CD14-positive monocyte (primary cell): ENCODE measurements at regions of chr10 and their contacts with region 1.

Region 1: DNA sequence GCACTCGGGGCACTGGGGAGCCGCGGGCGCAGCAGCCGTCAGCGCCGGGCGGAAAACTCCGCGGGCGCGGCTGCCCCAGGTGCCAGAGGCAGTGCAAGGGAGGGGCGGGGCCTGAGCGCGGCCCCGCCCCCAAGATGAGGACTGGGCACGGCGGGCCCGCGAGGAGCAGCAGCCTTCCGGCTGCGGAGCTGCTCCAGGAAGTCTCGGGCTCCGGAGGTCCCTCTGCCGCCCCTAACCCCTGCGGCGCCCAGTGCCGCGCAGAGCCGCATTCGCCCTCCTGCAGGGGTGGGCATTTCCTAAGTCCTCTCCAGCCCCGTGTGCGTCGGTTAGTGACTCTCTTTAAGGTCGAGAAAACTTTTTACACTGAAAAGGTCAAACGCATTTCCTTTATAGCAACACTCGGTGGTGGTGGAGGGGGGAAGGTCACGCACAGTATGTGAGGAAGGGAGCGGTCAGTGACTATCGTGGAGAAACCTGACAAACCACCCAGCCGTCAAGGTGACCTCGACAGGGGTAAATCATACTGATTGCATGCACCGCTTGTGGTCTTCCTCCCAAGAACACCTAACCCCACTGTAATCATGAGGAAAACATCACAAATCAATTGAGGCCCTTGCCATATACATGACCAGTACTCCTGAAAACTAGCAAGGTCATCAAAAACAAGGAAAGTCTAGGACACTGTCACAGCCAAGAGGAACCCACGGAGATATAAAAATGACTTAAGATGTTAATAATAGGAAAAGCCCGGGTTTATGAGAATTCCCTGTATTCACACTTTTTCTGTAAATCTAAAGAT is at the start of gene ANXA11:
- DNase-seq: peak; percentile 69 to 80 (median 74)
- H3K4me3 ChIP-seq: peak within 1 kb of the TSS; percentile 73 to 92 (median 91)
- H3K4me3 Mint-ChIP-seq: peak within 1 kb of the TSS; percentile 88 to 97
- H3K27ac ChIP-seq: peak within 1 kb of the TSS; percentile 72 to 81
- H3K27ac Mint-ChIP-seq: peak within 1 kb of the TSS; percentile 87 to 97 (median 92)
- H3K4me1 ChIP-seq: peaks cover 47 to 49% of the 10 kb centered on the region in 2 donors
- H3K4me1 Mint-ChIP-seq: peaks cover 50% of the 10 kb centered on the region
- H3K27me3 ChIP-seq: no peaks in the 10 kb centered on the region
- H3K27me3 Mint-ChIP-seq: peaks cover 2% of the 10 kb centered on the region in 3 donors
- CTCF ChIP-seq: no peak
- polyA plus RNA-seq, gene ANXA11: 95.6 to 174 (median 134) TPM

Region 2: GRCh38 chr10:80078448-80079311 is 127.0 kb before region 1 on chr10 and contains the start of gene TMEM254:
- intact Hi-C with region 1: loop called in 1 of 2 experiments (anchors 10 kb)
- DNase-seq: peak; percentile 80 to 91 (median 81)
- H3K4me3 ChIP-seq: peak within 1 kb of the TSS; percentile 59 to 98 (median 85)
- H3K4me3 Mint-ChIP-seq: peak within 1 kb of the TSS; percentile 95 to 99
- H3K27ac ChIP-seq: peak within 1 kb of the TSS; percentile 70 to 88
- H3K27ac Mint-ChIP-seq: peak within 1 kb of the TSS; percentile 82 to 94 (median 87)
- H3K4me1 ChIP-seq: peaks cover 13 to 16% of the 10 kb centered on the region in 2 donors
- H3K4me1 Mint-ChIP-seq: peaks cover 18% of the 10 kb centered on the region
- H3K27me3 ChIP-seq: no peaks in the 10 kb centered on the region
- H3K27me3 Mint-ChIP-seq: no peaks in the 10 kb centered on the region
- CTCF ChIP-seq: no peak
- polyA plus RNA-seq, gene TMEM254: 13.6 to 43.1 (median 25.9) TPM

Region 3: DNA sequence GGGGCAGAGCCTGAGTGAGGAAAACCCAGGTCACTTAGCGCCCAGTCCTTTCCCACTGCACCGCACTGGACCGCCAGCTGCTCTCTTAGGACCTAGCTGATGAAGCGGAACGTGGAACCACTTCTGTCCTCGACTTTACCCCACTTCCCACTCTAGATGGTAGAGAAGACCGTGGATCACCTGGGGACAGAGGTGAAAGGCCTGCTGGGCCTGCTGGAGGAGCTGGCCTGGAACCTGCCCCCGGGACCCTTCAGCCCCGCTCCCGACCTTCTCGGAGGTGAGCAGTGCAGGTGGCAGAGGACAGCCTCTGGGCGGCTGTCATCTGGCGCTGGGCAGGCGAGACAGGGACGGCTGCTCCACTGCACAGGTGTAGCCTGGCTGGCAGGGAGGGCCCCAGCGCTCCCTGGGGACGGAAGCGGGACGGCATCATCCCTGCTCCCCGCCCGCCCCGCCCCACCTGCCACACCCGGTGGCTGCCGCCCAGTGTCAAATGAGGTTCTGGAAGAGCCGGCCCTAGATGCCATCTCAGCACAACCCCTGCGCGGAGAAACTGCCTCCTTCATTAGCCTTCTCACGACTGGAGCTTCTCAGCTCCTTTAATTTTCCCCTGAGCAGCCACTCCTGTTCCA is 61.5 kb before region 1 on chr10:
- intact Hi-C with region 1: loop called in 1 of 2 experiments (anchors 5 kb)
- DNase-seq: no peak
- H3K4me3 ChIP-seq: no peak overlapping the region
- H3K4me3 Mint-ChIP-seq: peak overlapping the region in 1 of 2 donors; percentile 79
- H3K27ac ChIP-seq: no peak overlapping the region
- H3K27ac Mint-ChIP-seq: no peak overlapping the region
- H3K4me1 ChIP-seq: peaks cover 12 to 14% of the 10 kb centered on the region in 2 donors
- H3K4me1 Mint-ChIP-seq: peaks cover 21% of the 10 kb centered on the region
- H3K27me3 ChIP-seq: peaks cover 0 to 5% of the 10 kb centered on the region in 2 donors
- H3K27me3 Mint-ChIP-seq: peaks cover 12 to 23% (median 12%) of the 10 kb centered on the region in 3 donors
- CTCF ChIP-seq: peak; percentile 61

Region 4: GRCh38 chr10:80158598-80159127 is 47.0 kb before region 1 on chr10:
- intact Hi-C with region 1: loop called (anchors 5 kb)
- DNase-seq: peak; percentile 35 to 82 (median 44)
- H3K4me3 ChIP-seq: no peak overlapping the region
- H3K4me3 Mint-ChIP-seq: peak overlapping the region in 1 of 2 donors; percentile 14
- H3K27ac ChIP-seq: peak overlapping the region; percentile 39 to 63
- H3K27ac Mint-ChIP-seq: peak overlapping the region in 6 of 7 donors; percentile 58 to 78 (median 66)
- H3K4me1 ChIP-seq: peaks cover 19 to 20% of the 10 kb centered on the region in 2 donors
- H3K4me1 Mint-ChIP-seq: peaks cover 27% of the 10 kb centered on the region
- H3K27me3 ChIP-seq: no peaks in the 10 kb centered on the region
- H3K27me3 Mint-ChIP-seq: no peaks in the 10 kb centered on the region
- CTCF ChIP-seq: no peak

Region 5: GRCh38 chr10:80191589-80192255 is 14.0 kb before region 1 on chr10:
- intact Hi-C with region 1: loop called in 1 of 2 experiments (anchors 1 kb)
- DNase-seq: no peak
- H3K4me3 ChIP-seq: no peak overlapping the region
- H3K4me3 Mint-ChIP-seq: no peak overlapping the region
- H3K27ac ChIP-seq: peak overlapping the region in 1 of 2 donors; percentile 63
- H3K27ac Mint-ChIP-seq: peak overlapping the region in 6 of 7 donors; percentile 15 to 87 (median 56)
- H3K4me1 ChIP-seq: peaks cover 65 to 81% of the 10 kb centered on the region in 2 donors
- H3K4me1 Mint-ChIP-seq: peaks cover 82% of the 10 kb centered on the region
- H3K27me3 ChIP-seq: no peaks in the 10 kb centered on the region
- H3K27me3 Mint-ChIP-seq: peaks cover 0 to 2% (median 0%) of the 10 kb centered on the region in 3 donors
- CTCF ChIP-seq: no peak

Region 6: GRCh38 chr10:81179805-81180452 is 974.3 kb after region 1 on chr10:
- intact Hi-C with region 1: no loop called
- DNase-seq: no peak
- H3K4me3 ChIP-seq: no peak overlapping the region
- H3K4me3 Mint-ChIP-seq: no peak overlapping the region
- H3K27ac ChIP-seq: no peak overlapping the region
- H3K27ac Mint-ChIP-seq: no peak overlapping the region
- H3K4me1 ChIP-seq: no peaks in the 10 kb centered on the region
- H3K4me1 Mint-ChIP-seq: no peaks in the 10 kb centered on the region
- H3K27me3 ChIP-seq: no peaks in the 10 kb centered on the region
- H3K27me3 Mint-ChIP-seq: peaks cover 0 to 1% (median 0%) of the 10 kb centered on the region in 3 donors
- CTCF ChIP-seq: peak; percentile 15